ENCODE measurements at regions of chr10 and their contacts with region 1.

Region 1: DNA sequence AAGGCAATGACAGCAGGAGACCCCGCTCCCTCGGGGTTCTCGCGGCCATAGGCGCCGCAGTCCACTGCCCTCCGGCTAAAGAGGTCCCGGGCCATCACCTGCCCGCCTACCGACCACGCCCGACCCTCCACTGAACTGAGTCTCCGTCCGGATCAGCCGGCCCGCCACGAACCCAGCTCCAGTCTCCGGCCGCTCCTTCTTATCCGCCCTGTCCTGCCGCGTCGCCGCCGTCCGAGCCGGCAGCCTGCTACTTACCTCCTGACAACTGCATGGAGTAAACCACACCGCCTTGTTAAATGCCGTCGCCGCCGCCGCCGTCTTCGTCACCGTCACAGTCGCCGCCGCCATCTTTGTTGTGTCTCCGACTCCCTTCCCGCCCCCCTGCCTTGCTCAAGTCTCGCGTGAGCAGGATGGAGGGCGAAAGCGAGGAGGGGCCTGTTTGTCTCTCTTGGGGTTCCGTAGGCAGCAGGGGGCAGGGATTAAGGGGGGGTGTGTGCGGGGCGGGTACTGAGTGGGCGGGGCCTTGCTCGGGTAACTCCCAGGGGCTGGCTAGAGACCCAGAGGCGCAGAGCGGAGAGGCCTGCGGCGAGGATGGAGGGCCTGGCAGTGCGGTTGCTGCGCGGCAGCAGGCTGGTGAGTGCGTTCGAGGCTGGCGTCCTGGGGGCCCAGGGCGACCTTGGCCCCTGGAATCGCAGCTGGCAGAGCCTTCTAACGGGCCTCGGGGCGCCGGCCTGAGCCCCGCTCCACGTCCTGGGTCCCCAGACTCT is at the starts of genes ACADSB and IKZF5:
- DNase-seq: peak; percentile 98
- ATAC-seq: peak; percentile 92
- H3K4me3 ChIP-seq: peak within 1 kb of the TSS; percentile 86 to 91
- H3K27ac ChIP-seq: peak within 1 kb of the TSS; percentile 64
- H3K4me1 ChIP-seq: peaks cover 12 to 14% of the 10 kb centered on the region in 2 experiments; a peak in 3 of 4 replicates
- H3K27me3 ChIP-seq: no peaks in the 10 kb centered on the region
- CTCF ChIP-seq: no peak
- POLR2A ChIP-seq: peak; percentile 96
- RAD21 ChIP-seq: no peak
- total RNA-seq, gene ACADSB: 33.3 TPM
- total RNA-seq, gene IKZF5: 17.1 TPM

Region 2: DNA sequence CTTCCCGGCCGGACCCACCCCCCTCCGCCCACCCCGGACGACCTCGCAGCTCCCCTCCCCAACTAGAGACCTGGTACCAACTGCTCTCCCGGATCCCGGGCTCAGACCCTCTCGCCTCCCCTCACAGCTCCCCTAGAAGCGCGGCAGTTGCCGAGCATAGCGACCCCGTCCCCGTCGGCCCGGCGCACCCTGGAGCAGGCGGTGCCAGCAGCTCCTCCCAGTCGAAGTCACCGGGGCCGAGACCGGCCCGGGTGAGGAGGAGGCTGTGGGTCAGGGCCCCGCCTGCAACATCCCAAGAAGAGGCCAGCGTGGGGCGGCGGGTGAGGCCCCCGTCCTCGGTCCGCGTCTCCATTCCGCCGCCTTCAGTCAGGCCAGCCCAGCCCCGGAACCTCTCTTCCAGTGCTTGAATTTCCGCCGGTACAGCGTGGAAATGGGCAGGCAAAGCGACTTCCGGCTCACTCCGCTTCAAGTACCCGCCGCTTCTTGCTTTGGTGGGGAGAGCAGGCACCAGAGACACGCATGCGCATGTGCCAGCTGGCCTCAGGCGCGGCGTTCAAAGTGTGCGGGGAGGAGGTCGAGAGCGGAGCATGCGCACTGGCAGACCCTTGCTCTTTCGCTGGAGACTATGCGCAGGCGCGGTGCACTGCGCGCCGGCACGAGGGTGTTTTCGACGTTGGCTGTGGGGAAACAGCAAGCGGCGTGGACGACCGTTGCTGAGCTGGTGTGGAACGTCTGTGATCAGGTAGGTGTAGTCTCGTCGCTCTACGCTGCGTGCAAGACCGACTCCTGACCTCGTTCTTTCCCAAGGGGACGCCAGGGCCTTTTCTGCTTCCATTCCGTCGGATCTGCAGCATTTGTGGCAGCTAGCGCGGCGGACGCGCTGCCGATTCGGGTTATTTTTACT is 54.5 kb before region 1 on chr10 and contains the start of gene C10orf88:
- CTCF ChIA-PET with region 1: no interaction called
- POLR2A ChIA-PET with region 1: no interaction called
- RAD21 ChIA-PET with region 1: no interaction called
- intact Hi-C with region 1: loop called (anchors 1 kb)
- DNase-seq: peak; percentile 99
- ATAC-seq: peak; percentile 99
- H3K4me3 ChIP-seq: peak within 1 kb of the TSS; percentile 72 to 83
- H3K27ac ChIP-seq: peak within 1 kb of the TSS; percentile 66; the same call in 1 of the 2 replicates
- H3K4me1 ChIP-seq: peaks cover 0 to 16% of the 10 kb centered on the region in 2 experiments; a peak in 2 of 4 replicates
- H3K27me3 ChIP-seq: no peaks in the 10 kb centered on the region
- CTCF ChIP-seq: no peak
- POLR2A ChIP-seq: peak; percentile 43
- RAD21 ChIP-seq: no peak
- total RNA-seq, gene C10orf88: 16.2 TPM

Region 3: GRCh38 chr10:122980209-122981065 is 28.2 kb before region 1 on chr10 and contains the start of gene PSTK:
- CTCF ChIA-PET with region 1: interaction called, 4 read pairs
- POLR2A ChIA-PET with region 1: interaction called, 3 read pairs
- RAD21 ChIA-PET with region 1: no interaction called
- intact Hi-C with region 1: loop called (anchors 1 kb)
- DNase-seq: peak; percentile 94
- ATAC-seq: peak; percentile 97
- H3K4me3 ChIP-seq: peak within 1 kb of the TSS; percentile 52 to 57
- H3K27ac ChIP-seq: peak within 1 kb of the TSS; percentile 78
- H3K4me1 ChIP-seq: peaks cover 8 to 16% of the 10 kb centered on the region in 2 experiments; a peak in 3 of 4 replicates
- H3K27me3 ChIP-seq: no peaks in the 10 kb centered on the region
- CTCF ChIP-seq: peak in 2 of 3 experiments; percentile 86 to 97; a peak in 4 of 6 replicates
- POLR2A ChIP-seq: peak; percentile 33
- RAD21 ChIP-seq: peak; percentile 35; the same call in 1 of the 2 replicates
- total RNA-seq, gene PSTK: 4.4 TPM

Region 4: DNA sequence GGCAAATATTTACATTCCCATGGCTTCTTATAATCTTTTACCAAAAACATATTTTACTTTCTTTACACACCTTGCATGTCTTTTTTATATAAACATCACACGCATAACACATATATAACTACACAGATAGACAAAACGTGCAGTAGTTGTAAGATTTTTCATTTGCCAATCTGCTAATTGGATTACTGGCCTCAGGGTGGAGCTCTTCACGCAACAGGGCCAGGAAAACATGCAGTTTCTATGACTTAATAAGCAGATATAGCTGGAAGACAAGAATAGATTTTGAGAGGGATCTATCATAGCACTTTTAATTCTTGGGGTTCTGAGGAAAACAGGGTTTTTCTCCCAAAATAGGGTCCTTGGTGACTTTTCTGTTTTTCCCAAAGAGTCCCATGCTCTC is 12.9 kb after region 1 on chr10:
- CTCF ChIA-PET with region 1: interaction called, 11 read pairs
- POLR2A ChIA-PET with region 1: interaction called, 9 read pairs
- RAD21 ChIA-PET with region 1: no interaction called
- intact Hi-C with region 1: no loop called
- DNase-seq: peak; percentile 29
- ATAC-seq: peak; percentile 86
- H3K4me3 ChIP-seq: no peak overlapping the region
- H3K27ac ChIP-seq: no peak overlapping the region
- H3K4me1 ChIP-seq: no peaks in the 10 kb centered on the region
- H3K27me3 ChIP-seq: no peaks in the 10 kb centered on the region
- CTCF ChIP-seq: peak; percentile 41 to 83 (median 80); a peak in 5 of 6 replicates
- POLR2A ChIP-seq: no peak
- RAD21 ChIP-seq: peak; percentile 50; the same call in 1 of the 2 replicates

Region 5: GRCh38 chr10:123154092-123154921 is 145.7 kb after region 1 on chr10 and contains the start of gene BUB3:
- CTCF ChIA-PET with region 1: no interaction called
- POLR2A ChIA-PET with region 1: interaction called, 3 read pairs
- RAD21 ChIA-PET with region 1: no interaction called
- intact Hi-C with region 1: loop called (anchors 1 kb)
- DNase-seq: peak; percentile 100
- ATAC-seq: peak; percentile 93
- H3K4me3 ChIP-seq: peak within 1 kb of the TSS; percentile 89 to 93
- H3K27ac ChIP-seq: peak within 1 kb of the TSS; percentile 88
- H3K4me1 ChIP-seq: peaks cover 8 to 20% of the 10 kb centered on the region in 2 experiments; a peak in 3 of 4 replicates
- H3K27me3 ChIP-seq: no peaks in the 10 kb centered on the region
- CTCF ChIP-seq: peak in 1 of 3 experiments; percentile 26; a peak in 1 of 6 replicates
- POLR2A ChIP-seq: peak; percentile 94
- RAD21 ChIP-seq: no peak
- total RNA-seq, gene BUB3: 271 TPM

Region 6: GRCh38 chr10:123284022-123284421 is 275.4 kb after region 1 on chr10:
- CTCF ChIA-PET with region 1: no interaction called
- POLR2A ChIA-PET with region 1: no interaction called
- RAD21 ChIA-PET with region 1: no interaction called
- intact Hi-C with region 1: no loop called
- DNase-seq: peak; percentile 12
- ATAC-seq: peak; percentile 70
- H3K4me3 ChIP-seq: no peak overlapping the region
- H3K27ac ChIP-seq: no peak overlapping the region
- H3K4me1 ChIP-seq: peaks cover 4 to 19% of the 10 kb centered on the region in 2 experiments
- H3K27me3 ChIP-seq: no peaks in the 10 kb centered on the region
- CTCF ChIP-seq: peak in 1 of 3 experiments; percentile 42; a peak in 2 of 6 replicates
- POLR2A ChIP-seq: no peak
- RAD21 ChIP-seq: peak; percentile 20; the same call in 1 of the 2 replicates

Measured in HCT116 (cell line).